Brain microvascular endothelial cell (primary cell): ENCODE measurements at regions of chr6 and their contacts with region 1.

Region 1: DNA sequence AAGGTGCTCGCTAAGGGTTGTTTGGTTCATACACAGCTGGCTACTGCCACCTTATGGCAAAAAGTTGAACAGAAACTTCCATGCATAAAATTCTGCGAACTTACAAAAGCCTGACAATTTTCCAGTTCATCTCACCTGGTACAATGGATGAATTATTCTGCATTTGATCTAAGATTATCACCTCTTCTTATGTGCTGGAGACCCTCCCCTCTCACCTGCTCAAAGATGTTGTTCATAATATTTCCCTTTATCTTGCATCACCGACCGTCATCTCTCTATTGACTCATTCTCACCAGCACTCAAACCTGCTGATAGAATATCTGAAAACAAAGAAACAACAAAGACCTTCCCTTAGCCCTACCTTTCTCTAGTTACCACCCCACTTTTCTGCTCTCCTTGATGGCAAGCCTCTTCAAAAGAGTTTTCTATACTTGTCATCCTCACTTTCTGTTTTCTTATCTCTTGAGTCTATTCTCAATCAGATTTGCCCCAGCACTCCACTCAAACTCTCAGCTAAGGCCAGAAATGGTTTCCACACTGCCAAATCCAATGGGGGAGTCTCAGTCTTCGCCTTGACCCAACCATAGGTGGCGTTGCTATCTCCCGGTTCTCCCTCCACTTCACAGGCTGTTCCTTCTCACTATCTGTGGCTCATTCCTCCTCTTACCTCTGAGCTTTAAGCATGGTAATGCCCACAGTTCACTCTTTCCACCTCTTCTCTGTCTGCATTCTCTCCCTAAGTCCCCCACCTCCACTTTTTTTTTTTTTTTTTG is 25.8 kb downstream of the SNRNP48 start:
- DNase-seq: peak; percentile 52
- H3K4me3 ChIP-seq: peak overlapping the region; percentile 17
- H3K27ac ChIP-seq: no peak overlapping the region
- H3K27me3 ChIP-seq: no peaks in the 10 kb centered on the region
- CTCF ChIP-seq: peak; percentile 83

Region 2: GRCh38 chr6:7238900-7239589 is 376.8 kb before region 1 on chr6:
- in situ Hi-C with region 1: no loop called
- DNase-seq: peak; percentile 75
- H3K4me3 ChIP-seq: no peak overlapping the region
- H3K27ac ChIP-seq: no peak overlapping the region
- H3K27me3 ChIP-seq: no peaks in the 10 kb centered on the region
- CTCF ChIP-seq: peak; percentile 83

Region 3: DNA sequence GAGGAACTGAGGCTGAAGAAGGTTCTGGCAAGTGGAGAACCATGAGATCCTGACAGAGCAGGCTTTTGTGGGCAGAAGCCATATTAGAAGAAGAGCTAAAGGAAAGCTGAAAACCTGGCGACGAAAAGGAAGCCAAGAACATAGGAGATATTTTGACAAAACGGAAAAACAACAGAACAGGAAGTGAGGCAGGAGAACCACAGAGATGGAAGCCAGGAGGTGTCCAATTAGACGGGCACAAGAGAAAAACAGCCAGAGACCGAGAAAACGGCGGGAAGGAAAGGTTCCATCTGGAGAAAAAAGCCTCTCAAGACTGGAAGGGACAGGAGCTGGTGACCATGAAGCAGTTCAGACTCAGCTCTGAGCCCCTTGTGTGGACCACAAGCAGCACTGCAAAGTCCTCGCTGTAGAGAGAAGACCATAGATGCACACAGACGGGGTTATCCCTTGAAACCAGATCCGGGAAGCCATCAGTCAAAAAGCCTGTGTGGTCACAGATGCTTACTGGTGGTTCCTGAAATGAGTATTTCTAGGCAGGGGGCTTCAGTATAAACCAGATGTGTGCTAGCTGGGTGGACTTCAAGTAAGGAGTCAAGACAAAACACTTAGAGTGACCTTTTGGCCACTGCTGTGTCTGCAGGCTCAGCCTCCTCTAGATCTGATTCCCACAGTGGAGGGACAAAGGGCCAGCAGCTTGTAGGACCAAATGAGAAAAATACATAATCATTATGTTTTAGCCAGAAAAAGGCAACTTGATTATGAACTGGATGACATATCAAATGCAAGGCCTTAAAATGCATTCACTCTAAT is 333.5 kb before region 1 on chr6:
- in situ Hi-C with region 1: loop called (anchors 25 kb)
- DNase-seq: no peak
- H3K4me3 ChIP-seq: no peak overlapping the region
- H3K27ac ChIP-seq: no peak overlapping the region
- H3K27me3 ChIP-seq: no peaks in the 10 kb centered on the region
- CTCF ChIP-seq: no peak

Region 4: DNA sequence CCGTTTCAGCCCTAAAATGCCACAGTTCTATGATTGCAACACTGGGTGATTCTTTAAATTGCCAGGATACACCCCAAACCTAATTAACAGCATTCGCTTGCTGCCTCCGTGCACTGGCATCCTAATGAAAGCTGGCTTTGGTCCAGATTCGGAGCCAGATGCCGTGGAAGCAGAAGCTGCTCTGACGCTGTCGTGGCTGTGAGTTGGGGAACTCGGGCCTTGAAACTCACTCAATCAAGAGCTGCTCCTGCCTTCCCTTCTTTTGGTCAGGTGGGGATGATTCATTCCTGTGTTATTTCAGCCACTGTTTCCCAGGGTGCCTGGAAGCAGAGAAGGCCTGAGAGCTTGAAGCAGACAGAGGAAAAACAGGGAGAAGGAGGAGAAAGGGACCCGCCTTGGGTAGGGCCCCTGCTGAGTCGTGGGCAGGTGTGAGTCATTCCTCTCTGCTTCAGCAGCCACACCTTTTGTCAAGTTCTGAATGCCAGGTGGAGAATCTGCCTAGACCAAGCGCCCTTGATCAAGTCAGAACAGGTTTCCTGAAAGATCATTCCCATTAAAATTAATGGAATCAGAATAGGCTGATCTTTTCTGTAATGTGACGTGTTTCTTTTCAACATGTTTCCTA is 110.5 kb before region 1 on chr6:
- in situ Hi-C with region 1: no loop called
- DNase-seq: peak; percentile 85
- H3K4me3 ChIP-seq: no peak overlapping the region
- H3K27ac ChIP-seq: no peak overlapping the region
- H3K27me3 ChIP-seq: no peaks in the 10 kb centered on the region
- CTCF ChIP-seq: no peak

Region 5: DNA sequence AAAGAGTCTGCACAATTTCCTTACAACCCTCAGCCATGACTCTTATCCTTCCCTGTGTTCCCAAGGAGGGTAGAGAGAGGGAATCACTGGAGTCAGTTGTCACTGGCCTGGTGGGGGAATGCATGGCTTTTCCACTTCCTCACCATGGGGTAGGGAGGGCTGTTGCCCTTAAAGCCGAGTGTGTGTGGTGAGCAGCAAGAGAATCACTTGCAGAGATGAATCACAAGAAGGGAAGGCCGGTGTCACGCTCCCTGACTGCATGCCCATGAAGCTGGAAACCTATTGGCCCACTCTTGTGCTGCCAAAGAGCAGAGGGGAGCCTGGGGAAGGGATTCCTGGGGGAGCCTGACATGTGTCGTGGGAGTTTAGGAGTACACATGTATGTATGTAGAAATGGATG is 92.0 kb after region 1 on chr6:
- in situ Hi-C with region 1: no loop called
- DNase-seq: peak; percentile 68
- H3K4me3 ChIP-seq: no peak overlapping the region
- H3K27ac ChIP-seq: no peak overlapping the region
- H3K27me3 ChIP-seq: no peaks in the 10 kb centered on the region
- CTCF ChIP-seq: no peak

Region 6: DNA sequence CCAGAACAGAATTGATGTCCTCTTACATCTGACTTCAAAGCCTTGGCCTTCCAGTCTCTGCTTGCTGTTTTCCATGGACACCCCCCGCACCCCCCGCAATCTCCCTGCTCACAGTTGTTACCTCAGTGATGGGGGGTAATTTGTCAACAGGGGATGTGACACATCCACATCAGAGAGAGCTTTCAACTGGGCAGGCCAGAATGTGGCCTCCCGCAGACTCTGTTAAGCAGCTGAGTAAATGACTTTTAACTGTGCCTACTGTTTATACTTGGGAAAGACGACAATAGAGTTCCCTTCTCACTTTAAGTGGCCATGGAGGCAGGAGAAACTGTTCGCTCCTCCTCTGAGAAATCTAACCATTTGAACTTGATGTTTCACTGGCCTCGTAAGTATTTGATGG is 243.8 kb after region 1 on chr6:
- in situ Hi-C with region 1: no loop called
- DNase-seq: no peak
- H3K4me3 ChIP-seq: no peak overlapping the region
- H3K27ac ChIP-seq: no peak overlapping the region
- H3K27me3 ChIP-seq: no peaks in the 10 kb centered on the region
- CTCF ChIP-seq: no peak